ENCODE measurements at regions of chr18 and their contacts with region 1.

Region 1: DNA sequence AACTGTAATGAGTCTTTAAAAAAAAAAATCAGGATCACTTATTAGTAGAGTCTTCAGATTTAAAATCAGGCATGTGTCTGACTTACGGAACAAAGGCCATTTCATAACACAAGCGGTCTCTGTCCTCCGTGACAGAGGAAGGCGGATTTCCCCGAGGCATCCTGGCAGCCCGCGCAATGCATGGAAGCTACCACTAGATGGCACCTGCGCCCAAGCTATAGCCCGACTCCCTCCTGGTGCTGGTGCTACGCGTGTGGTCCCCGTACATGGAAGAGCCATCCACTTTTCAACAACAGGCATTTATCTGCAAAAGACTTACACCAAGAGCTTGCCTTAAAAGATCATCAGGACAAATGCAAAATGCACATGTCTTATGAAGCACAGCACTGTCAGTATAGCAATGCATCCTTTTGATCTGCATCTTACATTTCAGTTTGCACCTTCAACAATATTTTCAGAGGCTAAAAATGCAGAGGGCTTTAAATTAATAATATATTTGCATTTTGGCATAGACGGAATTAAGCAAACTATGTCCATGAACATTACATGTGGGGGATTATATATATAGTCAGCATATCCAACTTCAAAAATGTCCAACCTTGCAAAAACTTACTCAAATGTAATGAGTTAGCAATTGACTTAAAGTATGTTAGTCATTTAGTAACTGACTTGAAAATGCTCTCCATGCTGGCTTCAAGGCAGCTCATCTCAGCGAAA is 96.0 kb downstream of the ZNF516 start:
- DNase-seq: peak; percentile 87
- ATAC-seq: peak; percentile 96
- H3K4me3 Mint-ChIP-seq: no peak overlapping the region
- H3K27ac Mint-ChIP-seq: no peak overlapping the region
- H3K4me1 Mint-ChIP-seq: peaks cover 5% of the 10 kb centered on the region
- H3K27me3 Mint-ChIP-seq: no peaks in the 10 kb centered on the region

Region 2: GRCh38 chr18:75790796-75791195 is 608.3 kb before region 1 on chr18:
- CTCF ChIA-PET with region 1: no interaction called
- POLR2A ChIA-PET with region 1: no interaction called
- intact Hi-C with region 1: no loop called
- DNase-seq: no peak
- ATAC-seq: no peak
- H3K4me3 Mint-ChIP-seq: no peak overlapping the region
- H3K27ac Mint-ChIP-seq: no peak overlapping the region
- H3K4me1 Mint-ChIP-seq: no peaks in the 10 kb centered on the region
- H3K27me3 Mint-ChIP-seq: peaks cover 6% of the 10 kb centered on the region

Region 3: DNA sequence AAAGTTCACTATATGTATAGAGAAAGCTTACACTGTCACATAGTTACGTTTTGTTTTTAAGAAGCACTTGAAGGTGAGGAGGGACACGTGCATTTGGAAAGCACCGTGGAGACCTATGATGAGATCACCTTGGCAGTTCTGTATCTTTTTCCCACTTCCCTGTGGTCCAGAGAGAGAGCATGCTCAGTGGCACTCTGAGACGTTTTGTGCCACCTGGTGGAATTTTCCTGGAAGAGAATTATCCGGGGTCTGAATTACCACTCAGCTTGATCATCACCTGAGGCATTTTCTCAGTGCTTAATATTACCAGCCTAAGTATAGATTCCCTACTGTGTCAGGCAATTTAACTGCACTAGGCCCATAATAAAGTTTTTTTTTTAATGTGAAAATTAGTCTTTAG is 502.2 kb before region 1 on chr18:
- CTCF ChIA-PET with region 1: no interaction called
- POLR2A ChIA-PET with region 1: no interaction called
- intact Hi-C with region 1: no loop called
- DNase-seq: no peak
- ATAC-seq: no peak
- H3K4me3 Mint-ChIP-seq: no peak overlapping the region
- H3K27ac Mint-ChIP-seq: no peak overlapping the region
- H3K4me1 Mint-ChIP-seq: no peaks in the 10 kb centered on the region
- H3K27me3 Mint-ChIP-seq: peaks cover 2% of the 10 kb centered on the region

Region 4: GRCh38 chr18:76388891-76389423 is 10.1 kb before region 1 on chr18:
- CTCF ChIA-PET with region 1: interaction called, 27 read pairs
- POLR2A ChIA-PET with region 1: no interaction called
- intact Hi-C with region 1: no loop called
- DNase-seq: peak; percentile 3
- ATAC-seq: no peak
- H3K4me3 Mint-ChIP-seq: no peak overlapping the region
- H3K27ac Mint-ChIP-seq: no peak overlapping the region
- H3K4me1 Mint-ChIP-seq: peaks cover 31% of the 10 kb centered on the region
- H3K27me3 Mint-ChIP-seq: no peaks in the 10 kb centered on the region

Region 5: GRCh38 chr18:76492669-76493212 is 93.7 kb after region 1 on chr18:
- CTCF ChIA-PET with region 1: no interaction called
- POLR2A ChIA-PET with region 1: no interaction called
- intact Hi-C with region 1: loop called in 1 of 2 experiments (anchors 2 kb)
- DNase-seq: peak; percentile 100
- ATAC-seq: peak; percentile 85
- H3K4me3 Mint-ChIP-seq: peak overlapping the region; percentile 87
- H3K27ac Mint-ChIP-seq: peak overlapping the region; percentile 89
- H3K4me1 Mint-ChIP-seq: peaks cover 36% of the 10 kb centered on the region
- H3K27me3 Mint-ChIP-seq: peaks cover 33% of the 10 kb centered on the region

Region 6: DNA sequence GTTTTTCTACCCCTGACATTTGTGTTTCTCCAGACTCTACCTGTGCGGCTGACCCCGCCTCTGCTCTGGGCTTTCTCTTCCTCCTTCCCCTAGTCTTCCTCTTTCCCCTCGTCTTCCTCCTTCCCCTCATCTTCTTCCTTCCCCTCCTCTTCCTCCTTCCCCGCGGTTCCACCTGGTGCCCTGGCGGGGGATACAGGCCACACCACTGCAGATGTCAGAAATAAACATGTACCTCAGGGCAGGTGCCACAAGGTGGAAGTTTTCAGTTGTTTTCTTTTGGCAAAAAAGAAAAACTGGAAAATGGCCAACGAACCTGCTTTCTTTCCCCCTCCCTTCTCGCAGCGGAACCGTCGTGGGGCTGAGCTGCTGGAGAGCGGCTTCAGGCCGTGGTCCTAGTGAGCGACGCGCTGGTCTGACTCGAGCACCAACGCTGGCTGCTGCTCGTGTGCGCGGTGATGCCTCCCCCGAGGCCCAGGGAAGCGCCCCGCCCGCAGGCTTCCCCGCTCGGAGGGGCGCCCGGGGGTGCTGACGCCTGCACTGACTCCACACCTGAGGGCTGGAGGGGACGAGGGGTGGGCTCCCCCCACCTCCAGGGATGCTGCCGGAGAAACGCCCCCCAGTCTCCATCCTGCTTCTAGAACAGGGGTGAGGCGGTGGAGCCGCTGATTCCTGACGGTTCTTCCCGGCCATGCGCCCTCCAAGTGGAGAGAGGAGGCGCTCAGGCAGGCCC is 179.7 kb after region 1 on chr18:
- CTCF ChIA-PET with region 1: no interaction called
- POLR2A ChIA-PET with region 1: no interaction called
- intact Hi-C with region 1: loop called in 1 of 2 experiments (anchors 5 kb)
- DNase-seq: no peak
- ATAC-seq: no peak
- H3K4me3 Mint-ChIP-seq: no peak overlapping the region
- H3K27ac Mint-ChIP-seq: no peak overlapping the region
- H3K4me1 Mint-ChIP-seq: no peaks in the 10 kb centered on the region
- H3K27me3 Mint-ChIP-seq: peaks cover 12% of the 10 kb centered on the region

Region 7: DNA sequence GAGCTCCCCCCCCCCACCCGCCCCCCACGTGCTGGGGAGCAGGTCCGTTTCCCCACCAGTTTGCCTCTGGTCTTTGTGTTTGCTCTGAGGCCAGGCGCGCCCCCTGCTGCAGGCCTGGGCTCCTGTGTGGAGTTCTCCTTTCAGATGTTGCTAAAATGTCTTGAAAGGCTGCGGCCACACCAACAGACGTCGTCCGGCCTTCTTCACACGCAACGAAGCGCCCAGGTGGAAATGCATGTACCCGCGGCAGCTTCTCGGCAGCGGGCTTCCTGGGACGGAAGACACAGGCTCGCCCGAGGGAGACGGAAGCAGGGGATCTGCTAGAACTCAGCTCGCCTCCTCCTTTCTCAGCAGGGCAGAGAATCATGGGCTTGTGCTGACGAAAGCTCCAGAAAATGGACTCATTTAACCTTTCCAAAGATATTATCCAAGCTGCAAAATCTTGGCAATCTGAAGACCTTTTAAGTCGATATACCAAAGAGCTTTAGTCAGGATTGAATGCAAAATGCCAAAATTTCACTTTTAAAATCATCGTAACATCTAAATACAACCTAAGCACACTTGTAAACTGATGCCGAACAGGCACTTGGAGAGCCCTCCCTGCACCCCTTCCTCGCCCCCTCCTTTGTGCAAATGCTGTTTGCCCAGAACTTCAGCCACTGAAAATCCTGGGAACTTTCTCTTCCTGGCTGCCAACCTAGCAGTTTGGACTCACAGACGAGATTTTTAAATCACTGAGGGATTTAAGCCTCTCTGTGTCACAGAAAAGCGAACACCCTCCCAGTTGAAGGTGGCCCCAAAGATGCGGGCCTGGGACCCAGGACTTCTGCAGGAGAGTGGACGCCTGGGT is 221.5 kb after region 1 on chr18:
- CTCF ChIA-PET with region 1: no interaction called
- POLR2A ChIA-PET with region 1: no interaction called
- intact Hi-C with region 1: loop called (anchors 1 to 2 kb)
- DNase-seq: peak; percentile 64
- ATAC-seq: peak; percentile 72
- H3K4me3 Mint-ChIP-seq: peak overlapping the region; percentile 24
- H3K27ac Mint-ChIP-seq: no peak overlapping the region
- H3K4me1 Mint-ChIP-seq: peaks cover 16% of the 10 kb centered on the region
- H3K27me3 Mint-ChIP-seq: peaks cover 18% of the 10 kb centered on the region

Region 8: DNA sequence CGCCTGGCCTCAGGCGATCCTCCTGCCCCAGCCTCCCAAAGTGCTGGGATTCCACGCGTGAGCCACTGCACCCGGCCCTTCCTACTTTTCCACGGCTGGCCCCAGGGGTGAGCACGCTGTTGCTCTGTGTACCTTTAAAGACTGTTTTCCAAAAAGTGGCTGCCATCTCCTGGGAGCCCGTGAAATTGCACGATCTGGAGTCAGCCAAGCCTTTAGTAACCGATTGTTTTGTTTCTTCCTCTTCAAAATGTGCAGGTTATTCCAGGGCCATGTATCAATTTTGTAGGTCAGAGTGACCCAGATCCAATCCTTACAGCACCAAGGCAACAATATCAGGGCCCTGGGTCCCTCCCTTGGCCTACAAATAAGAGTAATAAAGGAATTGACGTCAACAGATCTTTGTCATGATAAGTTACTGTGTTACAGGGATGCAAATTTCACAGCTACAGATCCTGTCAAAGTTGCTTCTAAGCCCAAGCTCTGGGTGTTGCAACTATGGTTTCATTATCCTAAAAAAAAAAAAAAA is 287.7 kb after region 1 on chr18:
- CTCF ChIA-PET with region 1: interaction called, 7 read pairs
- POLR2A ChIA-PET with region 1: no interaction called
- intact Hi-C with region 1: loop called (anchors 1 kb)
- DNase-seq: peak; percentile 63
- ATAC-seq: peak; percentile 68
- H3K4me3 Mint-ChIP-seq: no peak overlapping the region
- H3K27ac Mint-ChIP-seq: no peak overlapping the region
- H3K4me1 Mint-ChIP-seq: peaks cover 9% of the 10 kb centered on the region
- H3K27me3 Mint-ChIP-seq: peaks cover 11% of the 10 kb centered on the region

Region 9: GRCh38 chr18:76709659-76710645 is 310.9 kb after region 1 on chr18:
- CTCF ChIA-PET with region 1: interaction called, 65 read pairs
- POLR2A ChIA-PET with region 1: no interaction called
- intact Hi-C with region 1: loop called (anchors 1 kb)
- DNase-seq: peak; percentile 78
- ATAC-seq: peak; percentile 95
- H3K4me3 Mint-ChIP-seq: no peak overlapping the region
- H3K27ac Mint-ChIP-seq: no peak overlapping the region
- H3K4me1 Mint-ChIP-seq: peaks cover 4% of the 10 kb centered on the region
- H3K27me3 Mint-ChIP-seq: no peaks in the 10 kb centered on the region

Measured in activated CD4-positive, alpha-beta T cell treated with anti-CD3 and anti-CD28 coated beads for 36 hours (primary cell).